ENCODE measurements at regions of chr4 and their contacts with region 1.

Region 1: DNA sequence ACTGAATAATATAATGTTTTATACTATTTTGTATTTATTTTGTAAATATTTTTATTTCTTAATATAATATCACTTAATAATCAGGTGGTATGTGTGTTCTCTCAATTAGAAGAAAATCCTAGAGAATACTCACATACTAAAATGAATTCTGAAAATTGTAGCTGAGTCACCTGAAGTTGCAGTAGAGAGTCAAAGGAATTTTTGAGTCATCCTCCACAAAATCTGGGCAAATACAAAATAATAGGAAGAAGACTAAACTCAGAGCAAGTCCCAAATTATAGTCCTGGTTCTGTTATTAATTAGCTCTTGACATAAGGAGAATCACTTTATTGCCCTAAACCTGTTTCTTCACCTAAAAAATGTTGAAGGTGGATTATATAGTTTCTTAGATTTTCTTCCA is 57.8 kb downstream of the SPATA4 start:
- DNase-seq: no peak
- H3K4me3 ChIP-seq: no peak overlapping the region
- H3K27ac ChIP-seq: no peak overlapping the region
- H3K4me1 ChIP-seq: no peaks in the 10 kb centered on the region
- CTCF ChIP-seq: no peak

Region 2: DNA sequence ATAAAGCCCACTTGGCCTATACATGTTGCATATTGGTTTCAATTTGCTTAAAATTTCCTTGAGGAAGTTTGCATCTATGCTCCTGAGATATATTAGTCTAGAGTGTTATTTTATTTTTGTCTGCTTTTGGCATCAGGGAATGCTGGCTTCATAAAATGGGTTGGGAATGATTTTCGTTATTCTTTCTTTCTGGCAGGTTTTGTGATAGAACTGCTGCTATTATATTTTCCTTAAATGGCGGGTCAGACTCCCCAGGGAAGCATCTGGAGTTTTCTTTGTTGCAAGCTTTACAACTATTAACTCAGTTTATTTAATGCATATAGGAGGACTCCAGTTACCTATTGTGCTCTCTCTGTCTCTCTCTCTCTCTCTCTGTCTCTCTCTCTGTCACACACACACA is 154.0 kb before region 1 on chr4:
- CTCF ChIA-PET with region 1: no interaction called
- POLR2A ChIA-PET with region 1: no interaction called
- intact Hi-C with region 1: no loop called
- DNase-seq: no peak
- H3K4me3 ChIP-seq: no peak overlapping the region
- H3K27ac ChIP-seq: no peak overlapping the region
- H3K4me1 ChIP-seq: no peaks in the 10 kb centered on the region
- CTCF ChIP-seq: no peak

Region 3: DNA sequence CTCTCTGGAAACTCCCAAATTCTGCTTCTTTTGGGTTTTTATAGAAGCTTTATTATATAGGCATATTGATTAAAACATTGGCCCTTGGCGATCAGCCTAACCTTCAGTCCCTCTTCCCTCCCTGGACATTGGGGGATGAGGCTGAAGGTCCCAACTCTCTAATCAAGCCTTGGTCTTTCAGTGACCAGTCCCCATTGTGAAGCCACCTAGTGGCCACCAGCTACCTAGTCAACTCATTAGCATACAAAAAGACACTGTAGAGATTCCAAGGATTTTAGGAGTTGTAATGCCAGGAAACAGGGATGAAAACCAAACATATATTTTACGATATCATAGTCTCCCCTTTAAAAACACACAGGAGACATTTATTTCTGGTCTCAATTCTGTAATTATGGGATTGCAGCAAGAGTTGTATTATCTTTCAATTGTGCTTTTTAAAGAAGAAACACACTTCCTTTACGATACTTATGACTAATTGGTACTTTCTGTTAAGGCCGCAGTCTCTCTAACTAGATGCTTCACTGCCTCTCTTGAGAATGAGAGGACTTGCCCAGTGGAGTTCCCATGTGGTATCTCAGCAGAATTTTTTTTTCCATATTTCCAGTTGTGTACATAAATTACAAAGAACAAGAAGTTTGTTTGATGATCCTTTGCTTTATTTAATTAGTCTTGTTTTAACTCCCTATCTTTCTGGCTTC is 13.8 kb before region 1 on chr4:
- CTCF ChIA-PET with region 1: no interaction called
- POLR2A ChIA-PET with region 1: interaction called, 10 read pairs
- intact Hi-C with region 1: no loop called
- DNase-seq: peak; percentile 25
- H3K4me3 ChIP-seq: no peak overlapping the region
- H3K27ac ChIP-seq: no peak overlapping the region
- H3K4me1 ChIP-seq: peaks cover 3% of the 10 kb centered on the region
- CTCF ChIP-seq: peak; percentile 75